Heart right ventricle (tissue), 16 donors: ENCODE measurements at regions of chr10 and their contacts with region 1.

Region 1: GRCh38 chr10:29757551-29758297 is 123.0 kb upstream of the SVIL start:
- DNase-seq: no peak
- ATAC-seq: no peak
- H3K4me3 ChIP-seq: no peak overlapping the region
- H3K27ac ChIP-seq: no peak overlapping the region
- H3K4me1 ChIP-seq: peaks cover 0 to 6% (median 0%) of the 10 kb centered on the region in 9 donors
- H3K27me3 ChIP-seq: no peaks in the 10 kb centered on the region
- CTCF ChIP-seq: no peak

Region 2: GRCh38 chr10:29317027-29317420 is 440.7 kb before region 1 on chr10:
- intact Hi-C with region 1: no loop called
- DNase-seq: no peak
- ATAC-seq: no peak
- H3K4me3 ChIP-seq: no peak overlapping the region
- H3K27ac ChIP-seq: no peak overlapping the region
- H3K4me1 ChIP-seq: peaks cover 0 to 21% (median 17%) of the 10 kb centered on the region in 9 donors
- H3K27me3 ChIP-seq: peaks cover 0 to 5% (median 0%) of the 10 kb centered on the region in 7 donors
- CTCF ChIP-seq: no peak

Region 3: GRCh38 chr10:29617880-29618340 is 139.8 kb before region 1 on chr10:
- intact Hi-C with region 1: no loop called
- DNase-seq: peak in 1 of 2 donors; percentile 44
- ATAC-seq: peak; percentile 31 to 77 (median 66)
- H3K4me3 ChIP-seq: peak overlapping the region in 4 of 10 donors; percentile 3 to 16 (median 8)
- H3K27ac ChIP-seq: peak overlapping the region; percentile 37 to 75 (median 70)
- H3K4me1 ChIP-seq: peaks cover 0 to 51% (median 44%) of the 10 kb centered on the region in 9 donors
- H3K27me3 ChIP-seq: no peaks in the 10 kb centered on the region
- CTCF ChIP-seq: no peak

Region 4: DNA sequence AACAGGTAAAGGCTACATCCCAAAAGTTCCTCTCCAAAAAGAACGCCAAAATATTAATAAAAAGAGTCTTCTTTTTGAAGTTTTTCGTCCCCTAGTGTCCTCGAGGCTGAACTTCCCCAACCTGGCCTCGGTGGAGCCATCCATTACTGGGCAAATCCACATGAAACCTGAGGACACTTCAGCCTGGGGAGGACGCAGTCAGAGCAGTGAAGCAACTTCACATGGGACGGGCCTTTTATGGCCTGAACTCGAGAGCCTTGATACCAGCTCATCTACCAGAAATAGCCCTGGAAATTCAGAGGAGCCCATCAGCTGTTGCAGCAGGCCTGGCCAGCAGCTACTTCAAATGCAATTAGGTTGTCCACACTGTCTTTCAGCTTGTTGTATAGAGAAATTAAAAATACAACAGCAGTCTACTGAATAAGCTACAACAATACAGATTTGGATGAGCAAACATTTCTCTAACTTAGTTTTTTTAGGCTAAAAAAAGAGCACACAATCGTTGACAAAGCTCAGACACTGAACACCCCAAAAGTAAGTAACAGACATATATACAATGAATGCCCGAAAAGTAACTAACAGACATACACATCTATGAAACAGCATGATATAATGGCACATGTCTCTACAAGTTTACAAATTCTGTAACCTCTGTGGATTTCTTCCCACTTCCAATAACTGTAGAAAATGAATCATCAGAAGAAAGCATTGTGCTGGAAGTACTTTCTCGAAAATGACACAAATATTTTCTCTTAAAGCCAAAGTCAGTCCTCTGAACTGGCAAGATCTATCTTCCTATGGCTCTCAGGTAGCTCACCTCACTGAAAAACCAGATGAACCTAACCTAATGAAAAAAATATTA is 122.7 kb before region 1 on chr10 and contains the start of gene SVIL:
- intact Hi-C with region 1: no loop called
- DNase-seq: peak; percentile 41 to 81
- ATAC-seq: peak; percentile 80 to 93 (median 86)
- H3K4me3 ChIP-seq: peak within 1 kb of the TSS; percentile 12 to 59 (median 50)
- H3K27ac ChIP-seq: peak within 1 kb of the TSS; percentile 62 to 93 (median 86)
- H3K4me1 ChIP-seq: peaks cover 2 to 49% (median 28%) of the 10 kb centered on the region in 9 donors
- H3K27me3 ChIP-seq: no peaks in the 10 kb centered on the region
- CTCF ChIP-seq: peak in 1 of 9 donors; percentile 6
- total RNA-seq, gene SVIL: 287 to 655 (median 537) TPM

Region 5: DNA sequence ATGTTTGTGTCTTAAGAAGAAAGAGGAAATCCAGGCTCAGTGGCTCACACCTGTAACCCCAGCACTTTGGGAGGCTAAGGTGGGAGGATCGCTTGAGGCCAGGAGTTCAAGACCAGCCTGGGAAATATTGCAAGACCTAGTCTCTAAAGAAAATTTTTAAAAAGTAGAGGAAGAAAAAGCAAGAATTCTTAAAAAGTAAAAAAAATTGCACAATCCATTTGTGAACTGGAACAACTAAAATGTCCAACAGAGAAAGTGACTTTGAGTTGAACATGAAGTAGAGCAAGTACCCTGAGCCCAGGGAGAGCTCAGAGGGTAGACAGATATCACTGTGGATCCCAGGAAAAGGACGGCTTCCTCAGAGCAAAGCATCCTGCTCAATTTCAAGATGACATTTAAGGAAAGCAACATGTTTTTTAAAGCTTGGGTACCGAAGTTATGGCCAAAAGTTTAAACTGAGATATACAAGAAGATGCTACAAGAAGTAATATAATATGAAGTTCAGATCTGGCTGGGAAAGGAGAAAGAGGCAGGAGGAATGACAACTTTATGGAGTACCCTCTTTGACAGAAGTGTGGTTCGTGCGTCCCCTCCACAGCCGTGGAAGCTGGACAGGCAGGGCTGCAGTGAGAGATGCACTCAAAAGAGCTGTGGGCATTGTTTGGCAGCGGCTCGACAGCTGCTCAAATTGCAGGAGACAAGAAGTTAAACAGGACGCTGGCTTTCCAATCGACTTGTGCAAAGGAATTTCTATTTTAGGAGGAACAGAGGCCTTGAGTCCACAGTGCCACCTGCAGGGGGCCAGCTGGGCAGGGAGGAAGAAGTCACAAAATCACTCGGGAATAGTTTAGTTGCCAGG is 100.3 kb after region 1 on chr10:
- intact Hi-C with region 1: loop called in 1 of 10 experiments (anchors 10 kb)
- DNase-seq: peak; percentile 65 to 67
- ATAC-seq: peak; percentile 67 to 94 (median 87)
- H3K4me3 ChIP-seq: peak overlapping the region in 1 of 10 donors; percentile 12
- H3K27ac ChIP-seq: peak overlapping the region in 6 of 10 donors; percentile 5 to 59 (median 40)
- H3K4me1 ChIP-seq: peaks cover 0 to 13% (median 10%) of the 10 kb centered on the region in 9 donors
- H3K27me3 ChIP-seq: no peaks in the 10 kb centered on the region
- CTCF ChIP-seq: peak; percentile 45 to 81 (median 68)